Pancreas (tissue), 10 donors: ENCODE measurements at regions of chr11 and their contacts with region 1.

Region 1: GRCh38 chr11:84714316-84714780 is 912.8 kb downstream of the DLG2 start:
- DNase-seq: peak; percentile 34 to 61 (median 52)
- ATAC-seq: peak; percentile 80 to 100 (median 98)
- H3K4me3 ChIP-seq: no peak overlapping the region
- H3K27ac ChIP-seq: no peak overlapping the region
- H3K4me1 ChIP-seq: no peaks in the 10 kb centered on the region
- H3K27me3 ChIP-seq: no peaks in the 10 kb centered on the region
- CTCF ChIP-seq: peak in 2 of 4 donors; percentile 16 to 29

Region 2: DNA sequence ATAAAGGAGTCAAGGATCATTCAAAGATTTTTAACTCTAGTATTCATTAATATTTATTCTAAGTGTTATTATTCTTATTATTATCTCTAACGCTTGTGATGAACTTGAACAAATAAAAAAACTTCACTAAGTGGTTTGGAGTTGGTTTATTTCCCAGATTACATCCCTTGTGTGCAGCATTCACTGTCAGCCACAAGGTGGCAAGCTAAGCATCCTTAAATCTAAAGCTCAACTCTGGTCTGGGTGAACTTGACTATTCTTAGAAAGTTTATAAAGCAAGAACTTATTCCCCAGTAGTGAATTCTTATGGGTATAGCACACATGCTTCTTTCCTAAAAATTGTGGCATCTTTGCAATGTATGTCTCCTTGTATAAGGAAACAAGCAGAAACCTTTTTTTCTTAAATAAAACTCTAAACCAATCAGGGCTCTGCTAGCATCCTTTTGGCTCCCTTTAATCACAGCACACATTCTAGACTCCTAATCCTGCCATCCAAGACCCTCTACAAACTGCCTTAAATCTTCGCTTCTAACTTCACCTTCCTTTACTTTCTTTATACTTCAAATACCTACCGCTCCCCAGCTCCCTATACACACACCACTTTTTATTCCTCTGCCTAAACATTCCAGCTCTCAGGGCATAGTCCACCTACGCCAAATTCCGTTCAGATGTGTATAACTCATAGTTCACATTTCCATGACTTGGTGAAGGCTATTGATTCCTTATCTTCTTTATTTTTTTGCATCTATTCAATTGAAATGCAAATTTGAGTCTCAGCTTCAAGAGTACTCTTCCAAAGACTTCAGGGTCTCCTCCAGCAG is 156.1 kb before region 1 on chr11:
- intact Hi-C with region 1: loop called in 1 of 3 experiments (anchors 5 kb)
- DNase-seq: peak in 4 of 6 donors; percentile 14 to 57 (median 22)
- ATAC-seq: peak; percentile 79 to 97 (median 94)
- H3K4me3 ChIP-seq: no peak overlapping the region
- H3K27ac ChIP-seq: no peak overlapping the region
- H3K4me1 ChIP-seq: no peaks in the 10 kb centered on the region
- H3K27me3 ChIP-seq: no peaks in the 10 kb centered on the region
- CTCF ChIP-seq: peak; percentile 61 to 73 (median 66)

Region 3: GRCh38 chr11:84580428-84580827 is 133.9 kb before region 1 on chr11:
- intact Hi-C with region 1: no loop called
- DNase-seq: no peak
- ATAC-seq: no peak
- H3K4me3 ChIP-seq: no peak overlapping the region
- H3K27ac ChIP-seq: no peak overlapping the region
- H3K4me1 ChIP-seq: no peaks in the 10 kb centered on the region
- H3K27me3 ChIP-seq: no peaks in the 10 kb centered on the region
- CTCF ChIP-seq: no peak